Activated naive CD4-positive, alpha-beta T cell treated with anti-CD3 and anti-CD28 coated beads for 36 hours (primary cell): ENCODE measurements at regions of chr15 and their contacts with region 1.

Region 1: DNA sequence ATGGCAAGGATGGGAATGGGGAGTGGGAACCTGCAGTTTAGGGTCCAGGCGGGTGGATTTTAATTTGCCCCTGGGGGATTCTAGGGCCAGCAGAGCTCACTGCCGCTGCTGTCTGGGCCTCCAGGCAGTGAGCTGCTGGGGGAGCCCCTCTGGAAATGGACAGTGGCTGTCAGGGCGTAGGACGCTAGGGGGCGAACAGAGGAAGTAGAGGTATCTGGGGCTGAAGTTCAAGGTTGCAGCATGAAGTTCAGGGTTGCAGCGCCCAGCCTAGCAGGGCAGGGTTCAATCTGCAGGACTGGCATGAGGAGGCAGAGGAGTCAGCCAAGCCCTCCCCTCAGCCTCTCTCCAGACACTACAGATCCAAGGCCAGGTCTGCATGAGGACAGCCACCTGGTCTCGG is 49.6 kb downstream of the APBA2 start:
- DNase-seq: peak; percentile 74
- H3K4me3 Mint-ChIP-seq: no peak overlapping the region
- H3K27ac Mint-ChIP-seq: no peak overlapping the region
- H3K4me1 Mint-ChIP-seq: peaks cover 61% of the 10 kb centered on the region
- H3K27me3 Mint-ChIP-seq: no peaks in the 10 kb centered on the region

Region 2: GRCh38 chr15:28892789-28893610 is 42.3 kb before region 1 on chr15:
- CTCF ChIA-PET with region 1: interaction called, 3 read pairs
- intact Hi-C with region 1: loop called (anchors 1 kb)
- DNase-seq: no peak
- H3K4me3 Mint-ChIP-seq: no peak overlapping the region
- H3K27ac Mint-ChIP-seq: no peak overlapping the region
- H3K4me1 Mint-ChIP-seq: peaks cover 70% of the 10 kb centered on the region
- H3K27me3 Mint-ChIP-seq: no peaks in the 10 kb centered on the region

Region 3: GRCh38 chr15:28921919-28922706 is 13.2 kb before region 1 on chr15:
- CTCF ChIA-PET with region 1: interaction called, 23 read pairs
- intact Hi-C with region 1: loop called (anchors 1 kb)
- DNase-seq: peak; percentile 12
- H3K4me3 Mint-ChIP-seq: no peak overlapping the region
- H3K27ac Mint-ChIP-seq: no peak overlapping the region
- H3K4me1 Mint-ChIP-seq: peaks cover 71% of the 10 kb centered on the region
- H3K27me3 Mint-ChIP-seq: no peaks in the 10 kb centered on the region

Region 4: GRCh38 chr15:28945626-28946230 is 10.4 kb after region 1 on chr15:
- CTCF ChIA-PET with region 1: interaction called, 4 read pairs
- intact Hi-C with region 1: loop called (anchors 1 kb)
- DNase-seq: no peak
- H3K4me3 Mint-ChIP-seq: no peak overlapping the region
- H3K27ac Mint-ChIP-seq: no peak overlapping the region
- H3K4me1 Mint-ChIP-seq: peaks cover 68% of the 10 kb centered on the region
- H3K27me3 Mint-ChIP-seq: no peaks in the 10 kb centered on the region

Region 5: GRCh38 chr15:29103824-29104565 is 168.7 kb after region 1 on chr15:
- CTCF ChIA-PET with region 1: interaction called, 3 read pairs
- intact Hi-C with region 1: loop called (anchors 5 kb)
- DNase-seq: peak; percentile 59
- H3K4me3 Mint-ChIP-seq: no peak overlapping the region
- H3K27ac Mint-ChIP-seq: no peak overlapping the region
- H3K4me1 Mint-ChIP-seq: no peaks in the 10 kb centered on the region
- H3K27me3 Mint-ChIP-seq: no peaks in the 10 kb centered on the region

Region 6: GRCh38 chr15:29821416-29822131 is 886.2 kb after region 1 on chr15:
- CTCF ChIA-PET with region 1: no interaction called
- intact Hi-C with region 1: loop called (anchors 10 kb)
- DNase-seq: peak; percentile 49
- H3K4me3 Mint-ChIP-seq: peak overlapping the region; percentile 36
- H3K27ac Mint-ChIP-seq: no peak overlapping the region
- H3K4me1 Mint-ChIP-seq: peaks cover 26% of the 10 kb centered on the region
- H3K27me3 Mint-ChIP-seq: peaks cover 56% of the 10 kb centered on the region